ENCODE measurements at regions of chr15 and their contacts with region 1.

Region 1: GRCh38 chr15:63288778-63289378 is 11.5 kb downstream of the APH1B start:
- DNase-seq: peak in 2 of 5 donors; percentile 72 to 81
- H3K4me3 ChIP-seq: no peak overlapping the region
- H3K27ac ChIP-seq: no peak overlapping the region
- H3K4me1 ChIP-seq: peaks cover 0 to 2% (median 0%) of the 10 kb centered on the region in 3 donors
- H3K27me3 ChIP-seq: no peaks in the 10 kb centered on the region
- CTCF ChIP-seq: peak; percentile 61

Region 2: GRCh38 chr15:63056794-63057193 is 232.1 kb before region 1 on chr15:
- intact Hi-C with region 1: no loop called
- DNase-seq: no peak
- H3K4me3 ChIP-seq: no peak overlapping the region
- H3K27ac ChIP-seq: no peak overlapping the region
- H3K4me1 ChIP-seq: peaks cover 6 to 36% (median 29%) of the 10 kb centered on the region in 3 donors
- H3K27me3 ChIP-seq: no peaks in the 10 kb centered on the region
- CTCF ChIP-seq: no peak

Region 3: GRCh38 chr15:63407612-63408011 is 118.7 kb after region 1 on chr15:
- intact Hi-C with region 1: loop called (anchors 5 kb)
- DNase-seq: peak in 3 of 5 donors; percentile 27 to 73 (median 46)
- H3K4me3 ChIP-seq: no peak overlapping the region
- H3K27ac ChIP-seq: no peak overlapping the region
- H3K4me1 ChIP-seq: no peaks in the 10 kb centered on the region
- H3K27me3 ChIP-seq: no peaks in the 10 kb centered on the region
- CTCF ChIP-seq: no peak